Ovary (tissue), 10 donors: ENCODE measurements at regions of chr12 and their contacts with region 1.

Region 1: GRCh38 chr12:93860668-93861373 is 183.6 kb downstream of the CRADD start:
- DNase-seq: no peak
- H3K4me3 ChIP-seq: no peak overlapping the region
- H3K27ac ChIP-seq: no peak overlapping the region
- H3K4me1 ChIP-seq: no peaks in the 10 kb centered on the region
- H3K27me3 ChIP-seq: no peaks in the 10 kb centered on the region
- CTCF ChIP-seq: no peak
- EP300 ChIP-seq: no peak
- POLR2A ChIP-seq: no peak

Region 2: DNA sequence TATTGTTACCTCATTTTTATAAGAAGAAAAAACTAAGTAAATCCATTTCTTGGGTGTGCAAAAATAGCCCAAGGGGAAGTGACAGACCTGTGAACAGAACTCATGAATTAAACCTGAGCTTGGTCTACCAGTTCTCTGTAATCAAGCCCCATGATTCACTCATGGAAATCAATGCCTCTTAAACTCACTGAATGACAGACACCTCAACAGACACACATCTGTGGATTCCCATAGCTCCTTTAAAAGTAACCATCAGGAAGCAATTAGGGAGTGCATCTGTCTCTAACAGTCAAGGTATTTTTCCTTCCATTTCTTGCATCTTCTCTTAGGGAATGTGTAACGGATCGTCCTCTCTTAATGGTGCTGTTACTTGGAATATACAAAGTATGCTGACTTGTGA is 716.7 kb before region 1 on chr12:
- intact Hi-C with region 1: loop called in 1 of 4 experiments (anchors 5 kb)
- DNase-seq: no peak
- H3K4me3 ChIP-seq: no peak overlapping the region
- H3K27ac ChIP-seq: no peak overlapping the region
- H3K4me1 ChIP-seq: no peaks in the 10 kb centered on the region
- H3K27me3 ChIP-seq: no peaks in the 10 kb centered on the region
- CTCF ChIP-seq: no peak
- EP300 ChIP-seq: no peak
- POLR2A ChIP-seq: no peak

Region 3: DNA sequence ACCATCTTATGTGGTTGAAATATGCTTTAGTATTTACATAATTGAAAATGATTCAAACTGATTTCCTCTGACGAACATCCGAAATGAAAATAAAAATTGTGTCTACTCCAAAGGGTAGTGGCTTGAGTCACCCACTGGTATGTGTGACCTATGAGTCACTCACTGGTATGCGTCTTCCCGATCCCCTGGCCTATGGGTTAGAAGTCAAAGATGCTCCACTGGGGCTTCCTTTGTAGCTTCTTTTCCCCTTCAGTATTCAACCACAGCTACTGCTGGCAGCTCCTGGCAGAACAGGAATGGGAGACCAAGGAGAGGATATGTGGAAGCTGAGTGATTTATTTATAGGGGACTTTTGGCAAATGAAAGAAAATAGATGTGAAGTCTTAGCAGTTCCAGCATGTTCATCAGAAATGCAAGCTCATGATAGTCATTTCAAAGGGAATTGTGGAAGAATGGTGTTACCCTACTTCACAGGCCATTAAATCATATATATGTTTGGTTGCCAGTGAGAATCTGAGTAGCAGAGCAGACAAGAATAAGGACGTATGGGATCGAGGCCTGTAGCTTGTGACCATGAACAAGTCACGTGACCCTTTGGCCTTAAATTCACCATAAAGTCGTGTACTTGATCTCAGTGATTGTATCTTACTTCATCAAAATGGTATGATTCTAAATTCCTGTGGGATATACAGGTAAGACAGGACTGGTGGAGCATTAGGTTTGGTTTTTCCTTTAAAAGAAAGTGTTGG is 75.4 kb before region 1 on chr12:
- intact Hi-C with region 1: no loop called
- DNase-seq: peak in 4 of 5 donors; percentile 25 to 65 (median 52)
- H3K4me3 ChIP-seq: no peak overlapping the region
- H3K27ac ChIP-seq: no peak overlapping the region
- H3K4me1 ChIP-seq: peaks cover 14% of the 10 kb centered on the region
- H3K27me3 ChIP-seq: no peaks in the 10 kb centered on the region
- CTCF ChIP-seq: no peak
- EP300 ChIP-seq: no peak
- POLR2A ChIP-seq: no peak

Region 4: DNA sequence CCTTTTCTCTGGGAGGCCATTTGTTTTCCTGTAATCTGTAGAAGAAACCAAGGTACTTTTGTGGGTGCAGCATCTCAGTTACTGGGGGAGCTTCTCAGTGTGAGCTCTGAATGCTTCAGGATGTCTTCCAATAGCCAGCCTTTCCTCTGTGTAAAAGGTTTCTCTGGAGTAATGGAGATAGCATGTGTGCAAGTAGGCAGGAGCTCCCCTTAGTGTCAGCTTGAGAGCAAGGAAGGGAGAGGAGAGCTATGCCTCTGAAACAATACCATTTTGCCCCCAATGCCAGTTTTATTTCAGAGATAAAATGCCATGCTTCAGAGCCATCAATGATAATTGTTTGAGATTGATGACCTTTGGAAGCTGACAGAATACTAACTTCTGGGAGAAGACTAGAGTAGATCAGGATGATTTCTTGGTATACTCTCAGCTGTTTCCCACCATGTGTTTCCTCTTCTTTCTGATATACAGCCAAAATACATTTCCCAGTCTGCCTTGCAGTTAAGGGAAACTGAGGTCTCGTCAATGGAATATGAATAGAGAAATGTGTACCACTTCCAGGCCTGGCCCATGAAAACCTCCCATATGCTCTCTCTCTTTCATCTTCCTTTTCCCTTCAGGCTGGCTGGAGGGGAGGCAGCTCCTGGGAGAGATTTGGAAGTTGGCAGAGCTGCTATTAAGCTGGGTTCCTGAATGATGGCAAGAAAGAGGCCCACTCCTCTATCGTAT is 58.0 kb before region 1 on chr12:
- intact Hi-C with region 1: no loop called
- DNase-seq: no peak
- H3K4me3 ChIP-seq: no peak overlapping the region
- H3K27ac ChIP-seq: peak overlapping the region in 1 of 2 donors; percentile 39
- H3K4me1 ChIP-seq: peaks cover 2% of the 10 kb centered on the region
- H3K27me3 ChIP-seq: no peaks in the 10 kb centered on the region
- CTCF ChIP-seq: no peak
- EP300 ChIP-seq: no peak
- POLR2A ChIP-seq: no peak